Natural killer cell (primary cell): ENCODE measurements at regions of chr17 and their contacts with region 1.

Region 1: DNA sequence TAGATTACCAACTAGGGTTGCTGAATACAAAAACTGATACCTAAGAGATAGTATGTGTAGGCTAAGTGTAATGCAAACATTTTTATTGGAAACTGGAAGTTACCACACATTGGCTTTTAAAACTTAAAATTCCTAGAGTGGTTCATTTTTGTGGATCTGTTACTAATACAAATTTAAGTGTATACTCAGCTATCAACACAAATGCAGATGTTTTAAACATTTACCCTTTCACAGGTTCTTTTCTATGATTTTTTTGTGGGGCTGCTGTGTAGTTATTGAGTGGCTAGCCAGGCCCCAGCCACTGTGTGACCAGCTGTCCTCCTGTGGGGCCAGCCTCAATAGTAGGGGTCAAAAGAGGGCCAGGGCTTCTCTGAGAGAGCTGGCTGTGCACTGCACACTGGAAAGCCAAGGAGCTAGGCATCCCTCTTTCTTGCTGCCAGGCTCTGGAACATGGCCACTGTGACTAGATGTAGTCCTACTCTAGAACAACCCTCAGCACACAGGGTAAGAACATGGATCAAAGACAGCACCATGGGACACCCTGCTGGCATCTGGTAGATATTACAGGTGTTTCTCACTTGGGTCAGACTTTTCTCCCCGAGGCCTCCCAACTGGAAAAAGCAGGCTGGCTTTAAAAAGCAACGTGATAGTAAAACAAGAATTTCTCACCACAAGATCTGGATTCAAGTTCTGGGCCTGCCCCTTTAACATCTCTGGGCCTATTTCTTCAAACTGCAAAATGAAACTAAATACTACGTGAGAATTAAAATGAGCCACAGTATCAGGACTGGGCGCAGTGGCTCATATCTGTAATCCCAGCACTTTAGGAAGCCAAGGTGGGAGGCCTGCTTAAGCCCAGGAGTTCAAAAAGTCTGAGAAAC is 7.3 kb upstream of the VEZF1 start:
- DNase-seq: peak; percentile 35 to 81
- ATAC-seq: peak; percentile 85 to 91 (median 90)
- H3K4me3 ChIP-seq: no peak overlapping the region
- H3K4me3 Mint-ChIP-seq: peak overlapping the region; percentile 26
- H3K27ac ChIP-seq: peak overlapping the region; percentile 30
- H3K27ac Mint-ChIP-seq: peak overlapping the region; percentile 64 to 84
- H3K4me1 ChIP-seq: peaks cover 11% of the 10 kb centered on the region
- H3K4me1 Mint-ChIP-seq: peaks cover 12 to 13% of the 10 kb centered on the region in 2 donors
- H3K27me3 ChIP-seq: no peaks in the 10 kb centered on the region
- H3K27me3 Mint-ChIP-seq: no peaks in the 10 kb centered on the region
- CTCF ChIP-seq: peak; percentile 56

Region 2: GRCh38 chr17:57858838-57859237 is 136.5 kb before region 1 on chr17:
- intact Hi-C with region 1: loop called (anchors 1 kb)
- DNase-seq: no peak
- ATAC-seq: no peak
- H3K4me3 ChIP-seq: no peak overlapping the region
- H3K4me3 Mint-ChIP-seq: no peak overlapping the region
- H3K27ac ChIP-seq: no peak overlapping the region
- H3K27ac Mint-ChIP-seq: no peak overlapping the region
- H3K4me1 ChIP-seq: peaks cover 14% of the 10 kb centered on the region
- H3K4me1 Mint-ChIP-seq: peaks cover 0 to 8% of the 10 kb centered on the region in 2 donors
- H3K27me3 ChIP-seq: peaks cover 11% of the 10 kb centered on the region
- H3K27me3 Mint-ChIP-seq: peaks cover 27 to 32% of the 10 kb centered on the region in 2 donors
- CTCF ChIP-seq: no peak

Region 3: DNA sequence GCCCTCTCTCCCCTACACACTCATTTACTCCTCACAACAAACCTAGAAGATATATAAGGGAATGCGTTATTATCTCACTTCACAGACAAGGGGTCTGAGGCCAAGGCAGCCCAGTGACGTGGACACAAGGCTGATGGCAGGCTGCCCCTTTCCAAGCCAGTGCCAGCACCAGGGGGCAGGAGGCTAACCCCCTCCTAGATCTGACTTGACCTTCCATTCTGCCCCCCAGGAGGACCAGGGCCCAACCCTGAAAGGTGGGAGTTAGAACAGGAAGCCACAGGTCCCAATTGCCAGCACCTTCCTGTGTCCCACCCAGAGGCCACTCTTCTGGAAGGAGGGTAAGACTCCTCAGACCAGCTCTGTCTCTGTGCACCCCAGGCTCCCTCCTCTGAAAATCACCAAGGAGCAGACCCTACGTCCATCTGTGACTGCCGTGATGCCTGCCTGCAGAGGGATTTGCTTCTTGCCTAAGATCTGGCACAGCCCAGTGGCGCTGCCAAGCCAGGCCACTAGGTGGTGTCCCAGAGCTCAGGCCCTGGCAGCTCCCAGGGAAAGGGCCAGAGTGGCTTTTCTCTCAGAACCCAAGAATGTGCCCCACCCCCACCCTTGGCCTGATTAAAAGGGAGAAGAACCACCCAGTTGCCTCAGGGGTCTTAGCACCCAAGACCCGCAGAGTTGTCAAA is 103.0 kb before region 1 on chr17:
- intact Hi-C with region 1: loop called (anchors 1 kb)
- DNase-seq: peak; percentile 72 to 84
- ATAC-seq: peak; percentile 87 to 95 (median 90)
- H3K4me3 ChIP-seq: no peak overlapping the region
- H3K4me3 Mint-ChIP-seq: no peak overlapping the region
- H3K27ac ChIP-seq: no peak overlapping the region
- H3K27ac Mint-ChIP-seq: peak overlapping the region in 1 of 2 donors; percentile 78
- H3K4me1 ChIP-seq: peaks cover 17% of the 10 kb centered on the region
- H3K4me1 Mint-ChIP-seq: peaks cover 11 to 15% of the 10 kb centered on the region in 2 donors
- H3K27me3 ChIP-seq: no peaks in the 10 kb centered on the region
- H3K27me3 Mint-ChIP-seq: peaks cover 0 to 2% of the 10 kb centered on the region in 2 donors
- CTCF ChIP-seq: peak; percentile 88

Region 4: GRCh38 chr17:57916925-57917858 is 78.1 kb before region 1 on chr17:
- intact Hi-C with region 1: loop called (anchors 2 kb)
- DNase-seq: peak in 1 of 2 donors; percentile 63
- ATAC-seq: peak in 2 of 3 donors; percentile 44 to 63
- H3K4me3 ChIP-seq: no peak overlapping the region
- H3K4me3 Mint-ChIP-seq: no peak overlapping the region
- H3K27ac ChIP-seq: no peak overlapping the region
- H3K27ac Mint-ChIP-seq: no peak overlapping the region
- H3K4me1 ChIP-seq: no peaks in the 10 kb centered on the region
- H3K4me1 Mint-ChIP-seq: peaks cover 0 to under 1% of the 10 kb centered on the region in 2 donors
- H3K27me3 ChIP-seq: no peaks in the 10 kb centered on the region
- H3K27me3 Mint-ChIP-seq: peaks cover 4 to 11% of the 10 kb centered on the region in 2 donors
- CTCF ChIP-seq: no peak

Region 5: GRCh38 chr17:57946798-57947358 is 48.4 kb before region 1 on chr17:
- intact Hi-C with region 1: loop called (anchors 5 kb)
- DNase-seq: peak; percentile 25 to 64
- ATAC-seq: peak; percentile 79 to 86 (median 85)
- H3K4me3 ChIP-seq: peak overlapping the region; percentile 28
- H3K4me3 Mint-ChIP-seq: peak overlapping the region; percentile 90
- H3K27ac ChIP-seq: no peak overlapping the region
- H3K27ac Mint-ChIP-seq: peak overlapping the region in 1 of 2 donors; percentile 74
- H3K4me1 ChIP-seq: peaks cover 49% of the 10 kb centered on the region
- H3K4me1 Mint-ChIP-seq: peaks cover 33 to 41% of the 10 kb centered on the region in 2 donors
- H3K27me3 ChIP-seq: no peaks in the 10 kb centered on the region
- H3K27me3 Mint-ChIP-seq: peaks cover 17 to 24% of the 10 kb centered on the region in 2 donors
- CTCF ChIP-seq: no peak

Region 6: GRCh38 chr17:58020401-58020800 is 25.1 kb after region 1 on chr17:
- intact Hi-C with region 1: no loop called
- DNase-seq: no peak
- ATAC-seq: no peak
- H3K4me3 ChIP-seq: no peak overlapping the region
- H3K4me3 Mint-ChIP-seq: no peak overlapping the region
- H3K27ac ChIP-seq: no peak overlapping the region
- H3K27ac Mint-ChIP-seq: no peak overlapping the region
- H3K4me1 ChIP-seq: no peaks in the 10 kb centered on the region
- H3K4me1 Mint-ChIP-seq: no peaks in the 10 kb centered on the region
- H3K27me3 ChIP-seq: peaks cover 3% of the 10 kb centered on the region
- H3K27me3 Mint-ChIP-seq: peaks cover 17 to 25% of the 10 kb centered on the region in 2 donors
- CTCF ChIP-seq: no peak